ENCODE measurements at regions of chr3 and their contacts with region 1.

Region 1: DNA sequence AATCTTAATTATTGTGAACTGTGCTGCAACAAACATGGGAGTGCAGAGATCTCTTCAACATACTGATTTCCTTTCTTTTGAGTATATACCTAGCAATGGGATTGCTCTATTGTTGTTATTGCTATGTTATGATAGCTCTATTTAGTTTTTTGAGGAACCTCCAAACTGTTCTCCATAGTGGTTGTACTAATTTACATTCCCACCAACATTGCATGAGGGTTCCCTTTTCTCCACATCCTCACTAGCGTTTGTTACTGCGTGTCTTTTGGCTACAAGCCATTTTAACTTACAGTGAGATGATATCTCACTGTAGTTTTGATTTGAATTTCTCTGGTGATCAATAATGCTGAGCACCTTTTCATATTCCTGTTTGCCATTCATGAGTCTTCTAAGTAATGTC is 45.5 kb upstream of the TNFSF10 start:
- DNase-seq: no peak
- ATAC-seq: no peak
- H3K4me3 ChIP-seq: no peak overlapping the region
- H3K27ac ChIP-seq: no peak overlapping the region
- H3K4me1 ChIP-seq: peaks cover 4% of the 10 kb centered on the region
- H3K27me3 ChIP-seq: no peaks in the 10 kb centered on the region
- CTCF ChIP-seq: no peak

Region 2: GRCh38 chr3:173090492-173090891 is 521.8 kb after region 1 on chr3:
- CTCF ChIA-PET with region 1: no interaction called
- POLR2A ChIA-PET with region 1: interaction called, 13 read pairs
- in situ Hi-C with region 1: no loop called
- intact Hi-C with region 1: no loop called
- DNase-seq: no peak
- ATAC-seq: no peak
- H3K4me3 ChIP-seq: no peak overlapping the region
- H3K27ac ChIP-seq: no peak overlapping the region
- H3K4me1 ChIP-seq: no peaks in the 10 kb centered on the region
- H3K27me3 ChIP-seq: peaks cover under 1% of the 10 kb centered on the region; the same call in 1 of the 2 replicates
- CTCF ChIP-seq: no peak